Dendritic cell treated with granulocyte-macrophage colony-stimulating factor and Interleukin-4, amounts not matched to agents 40 ng/mL and 50 ng/mL, for 4 days (primary cell): ENCODE measurements at regions of chr17 and their contacts with region 1.

Region 1: GRCh38 chr17:73142872-73143381 is 21.9 kb upstream of the SSTR2 start:
- H3K4me3 Mint-ChIP-seq: peak overlapping the region; percentile 42
- H3K27ac Mint-ChIP-seq: peak overlapping the region; percentile 88
- H3K4me1 Mint-ChIP-seq: peaks cover 59% of the 10 kb centered on the region
- H3K27me3 Mint-ChIP-seq: no peaks in the 10 kb centered on the region

Region 2: DNA sequence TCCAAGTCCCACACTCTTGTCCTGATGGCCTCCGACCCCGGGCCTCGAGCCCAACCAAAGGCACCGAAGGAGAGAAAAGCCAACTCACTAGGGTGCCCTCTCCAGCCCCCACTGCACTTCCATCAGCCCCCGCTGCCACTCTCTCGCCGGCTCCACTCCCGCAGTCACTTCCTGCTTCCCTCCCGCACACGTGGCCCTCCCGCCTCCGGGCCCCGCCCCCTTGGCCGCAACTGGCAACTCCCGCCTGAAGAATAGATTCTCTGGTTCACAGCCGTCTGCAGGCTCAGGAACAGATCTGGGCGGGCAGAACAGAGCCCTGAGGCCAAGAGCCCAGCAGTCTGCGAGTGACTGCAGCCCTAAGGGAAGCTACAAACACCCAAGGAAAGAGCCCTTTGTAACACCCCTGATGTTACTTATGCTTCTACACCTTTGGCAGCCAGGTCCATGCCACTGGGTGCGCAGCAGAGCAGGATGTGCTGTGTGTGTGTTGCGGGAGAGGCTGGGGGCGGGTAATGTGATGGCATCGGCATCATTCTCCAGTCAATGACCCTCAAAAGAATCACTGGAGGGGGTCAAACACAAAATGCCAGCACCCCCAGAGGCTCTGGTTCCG is 50.3 kb before region 1 on chr17 and contains the start of gene SLC39A11:
- intact Hi-C with region 1: loop called (anchors 5 kb)
- H3K4me3 Mint-ChIP-seq: peak within 1 kb of the TSS; percentile 100
- H3K27ac Mint-ChIP-seq: peak within 1 kb of the TSS; percentile 95
- H3K4me1 Mint-ChIP-seq: peaks cover 62% of the 10 kb centered on the region
- H3K27me3 Mint-ChIP-seq: no peaks in the 10 kb centered on the region

Region 3: DNA sequence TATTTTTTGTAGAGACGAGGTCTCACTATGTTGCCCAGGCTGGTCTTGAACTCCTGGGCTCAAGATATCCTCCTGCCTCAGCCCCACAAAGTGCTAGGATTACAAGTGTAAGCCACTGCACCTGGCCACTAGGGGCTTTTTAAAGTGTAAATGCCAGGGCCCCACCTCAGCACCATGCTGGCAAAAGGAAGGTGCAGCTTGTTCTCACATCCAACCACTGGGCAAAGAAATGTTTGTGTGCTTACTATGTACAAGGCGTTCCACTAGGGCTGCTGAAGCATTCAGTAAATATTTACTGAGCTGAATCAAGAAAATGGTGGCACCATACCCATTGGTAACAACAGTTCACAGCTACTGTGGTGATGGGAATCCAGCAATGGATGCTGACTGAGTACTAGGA is 72.5 kb after region 1 on chr17:
- intact Hi-C with region 1: no loop called
- H3K4me3 Mint-ChIP-seq: no peak overlapping the region
- H3K27ac Mint-ChIP-seq: no peak overlapping the region
- H3K4me1 Mint-ChIP-seq: peaks cover 16% of the 10 kb centered on the region
- H3K27me3 Mint-ChIP-seq: no peaks in the 10 kb centered on the region